Activated T-helper 1 cell treated with anti-CD3 and anti-CD28 coated beads, Interleukin-12 subunit alpha, Interleukin-12 subunit beta, Interleukin-2, Interleukin-4 antibody, amounts not matched to agents 30 ng/mL and 10 ng/mL and 1 ng/mL, durations not matched to agents 14 hours and 24 hours and 36 hours (primary cell): ENCODE measurements at regions of chr20 and their contacts with region 1.

Region 1: DNA sequence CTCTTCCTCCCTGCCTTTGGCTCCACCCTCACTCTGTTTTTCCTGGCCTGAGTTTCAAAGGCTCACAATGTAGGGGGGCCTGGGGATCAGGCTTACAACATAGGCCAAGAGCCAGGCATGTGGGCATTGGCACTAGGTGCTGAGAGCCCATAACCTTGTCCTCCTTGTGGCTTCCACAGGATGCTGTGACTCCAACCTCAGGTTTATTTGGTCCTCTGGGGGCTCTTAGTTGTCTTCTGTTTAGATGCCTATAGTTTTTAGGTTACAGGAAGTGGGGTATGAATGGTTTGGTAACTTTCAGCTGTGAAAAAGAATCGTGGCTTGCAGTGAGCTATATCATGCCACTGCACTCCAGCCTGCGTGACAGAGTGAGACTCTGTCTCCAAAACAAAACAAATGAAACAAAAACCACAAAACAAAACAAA is 25.6 kb downstream of the MMP24 start:
- DNase-seq: peak; percentile 62
- H3K4me3 Mint-ChIP-seq: peak overlapping the region; percentile 47
- H3K27ac Mint-ChIP-seq: peak overlapping the region; percentile 94
- H3K4me1 Mint-ChIP-seq: peaks cover 36% of the 10 kb centered on the region
- H3K27me3 Mint-ChIP-seq: no peaks in the 10 kb centered on the region

Region 2: GRCh38 chr20:35226775-35227681 is 25.0 kb before region 1 on chr20:
- intact Hi-C with region 1: loop called (anchors 1 kb)
- DNase-seq: peak; percentile 46
- H3K4me3 Mint-ChIP-seq: peak overlapping the region; percentile 70
- H3K27ac Mint-ChIP-seq: no peak overlapping the region
- H3K4me1 Mint-ChIP-seq: peaks cover 8% of the 10 kb centered on the region
- H3K27me3 Mint-ChIP-seq: peaks cover 41% of the 10 kb centered on the region

Region 3: DNA sequence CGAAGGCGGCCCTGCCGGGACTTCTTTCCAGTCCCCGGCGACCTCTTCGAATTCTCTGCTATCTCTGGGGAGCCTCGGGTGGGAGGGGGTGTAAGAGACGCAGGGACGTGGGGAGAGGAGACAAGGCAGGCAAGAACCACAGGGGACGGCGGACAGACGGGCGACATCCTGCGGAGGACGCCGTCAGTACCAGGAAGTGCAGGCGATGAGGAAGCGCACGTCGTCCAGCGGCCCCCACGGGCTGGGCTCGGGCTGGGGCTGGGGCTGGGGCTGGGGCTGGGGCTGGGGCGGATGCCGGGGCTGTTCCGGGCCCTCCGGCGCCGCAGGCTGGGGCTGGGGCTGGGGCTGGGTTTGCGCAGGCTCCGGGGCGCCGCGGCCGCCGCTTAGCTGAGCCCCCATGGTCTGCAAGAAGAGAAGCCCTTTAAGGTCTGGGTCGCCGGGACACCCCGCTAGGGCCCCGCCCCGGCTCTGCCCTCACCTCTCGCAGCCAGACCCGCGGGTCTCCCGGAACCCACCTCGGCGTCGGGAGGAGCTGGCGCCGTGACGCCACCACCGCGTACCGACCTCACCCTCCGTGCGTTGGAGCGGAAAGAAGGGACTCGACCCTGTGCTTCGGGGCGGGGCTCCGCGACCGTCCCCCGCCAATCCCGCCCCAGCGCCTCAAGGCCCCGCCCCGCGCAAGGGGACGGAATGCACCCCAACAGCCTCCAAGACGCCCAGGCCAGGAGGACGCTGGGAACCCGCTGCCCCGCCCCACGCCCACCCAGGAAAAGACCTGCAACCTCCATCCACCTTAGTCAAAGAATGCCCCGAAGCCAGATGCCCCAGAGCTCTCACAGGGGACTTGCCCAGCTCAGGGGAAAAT is 25.7 kb after region 1 on chr20 and contains the start of gene MMP24OS:
- intact Hi-C with region 1: loop called (anchors 1 kb)
- DNase-seq: peak; percentile 88
- H3K4me3 Mint-ChIP-seq: peak within 1 kb of the TSS; percentile 98
- H3K27ac Mint-ChIP-seq: peak within 1 kb of the TSS; percentile 99
- H3K4me1 Mint-ChIP-seq: peaks cover 18% of the 10 kb centered on the region
- H3K27me3 Mint-ChIP-seq: no peaks in the 10 kb centered on the region
- total RNA-seq, gene MMP24OS: 25.0 and 27.0 TPM in 2 replicates